HEK293 (cell line): ENCODE measurements at regions of chr16 and their contacts with region 1.

Region 1: DNA sequence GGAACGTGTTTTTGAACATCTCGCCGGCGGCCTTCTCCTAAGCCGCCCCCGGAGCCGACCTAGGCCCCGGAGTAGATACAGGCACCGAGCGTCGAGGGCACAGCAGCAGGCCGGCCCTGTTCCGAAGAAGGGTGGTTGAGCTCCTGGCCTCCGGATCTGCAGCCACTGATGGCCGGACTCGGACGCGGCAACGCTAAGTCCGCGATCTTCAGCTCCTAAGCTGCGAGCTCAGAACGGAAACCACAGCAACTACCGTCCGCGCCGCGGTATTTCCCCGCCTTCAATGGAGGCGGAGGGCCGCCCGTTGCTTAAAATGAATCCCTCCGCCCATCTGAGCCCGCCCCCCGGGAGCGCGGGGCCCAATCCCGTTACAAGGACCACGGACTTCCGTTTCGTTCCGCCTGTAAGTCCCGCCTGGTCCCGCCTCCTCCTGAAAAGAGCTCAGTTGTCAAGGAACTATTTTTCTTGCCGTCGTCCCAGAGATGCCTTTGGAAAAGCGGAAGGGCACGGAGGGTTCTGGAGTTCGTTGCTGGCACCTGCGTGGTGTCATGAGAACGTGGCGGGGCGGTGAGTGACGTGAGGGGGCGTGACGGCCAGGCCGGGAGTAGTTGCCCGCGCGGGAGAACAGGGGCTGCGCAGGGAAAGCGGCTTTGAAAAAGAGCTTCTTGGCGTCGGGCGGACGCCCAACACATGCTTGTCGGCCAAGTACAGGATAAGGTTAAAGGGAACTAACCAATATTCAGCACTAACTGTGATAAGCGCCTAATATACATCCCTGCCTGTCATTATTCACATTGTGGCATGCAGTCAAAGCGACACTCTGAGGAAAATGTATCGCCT is at the start of gene CFAP20:
- H3K4me3 ChIP-seq: peak within 1 kb of the TSS; percentile 83
- H3K27ac ChIP-seq: peak within 1 kb of the TSS; percentile 83
- H3K4me1 ChIP-seq: peaks cover 17% of the 10 kb centered on the region
- CTCF ChIP-seq: no peak

Region 2: GRCh38 chr16:57899771-57900661 is 229.3 kb before region 1 on chr16:
- CTCF ChIA-PET with region 1: interaction called, 13 read pairs
- POLR2A ChIA-PET with region 1: no interaction called
- H3K4me3 ChIP-seq: no peak overlapping the region
- H3K27ac ChIP-seq: no peak overlapping the region
- H3K4me1 ChIP-seq: no peaks in the 10 kb centered on the region
- CTCF ChIP-seq: peak; percentile 80

Region 3: GRCh38 chr16:57916735-57917451 is 212.4 kb before region 1 on chr16:
- CTCF ChIA-PET with region 1: no interaction called
- POLR2A ChIA-PET with region 1: no interaction called
- H3K4me3 ChIP-seq: no peak overlapping the region
- H3K27ac ChIP-seq: no peak overlapping the region
- H3K4me1 ChIP-seq: no peaks in the 10 kb centered on the region
- CTCF ChIP-seq: no peak

Region 4: DNA sequence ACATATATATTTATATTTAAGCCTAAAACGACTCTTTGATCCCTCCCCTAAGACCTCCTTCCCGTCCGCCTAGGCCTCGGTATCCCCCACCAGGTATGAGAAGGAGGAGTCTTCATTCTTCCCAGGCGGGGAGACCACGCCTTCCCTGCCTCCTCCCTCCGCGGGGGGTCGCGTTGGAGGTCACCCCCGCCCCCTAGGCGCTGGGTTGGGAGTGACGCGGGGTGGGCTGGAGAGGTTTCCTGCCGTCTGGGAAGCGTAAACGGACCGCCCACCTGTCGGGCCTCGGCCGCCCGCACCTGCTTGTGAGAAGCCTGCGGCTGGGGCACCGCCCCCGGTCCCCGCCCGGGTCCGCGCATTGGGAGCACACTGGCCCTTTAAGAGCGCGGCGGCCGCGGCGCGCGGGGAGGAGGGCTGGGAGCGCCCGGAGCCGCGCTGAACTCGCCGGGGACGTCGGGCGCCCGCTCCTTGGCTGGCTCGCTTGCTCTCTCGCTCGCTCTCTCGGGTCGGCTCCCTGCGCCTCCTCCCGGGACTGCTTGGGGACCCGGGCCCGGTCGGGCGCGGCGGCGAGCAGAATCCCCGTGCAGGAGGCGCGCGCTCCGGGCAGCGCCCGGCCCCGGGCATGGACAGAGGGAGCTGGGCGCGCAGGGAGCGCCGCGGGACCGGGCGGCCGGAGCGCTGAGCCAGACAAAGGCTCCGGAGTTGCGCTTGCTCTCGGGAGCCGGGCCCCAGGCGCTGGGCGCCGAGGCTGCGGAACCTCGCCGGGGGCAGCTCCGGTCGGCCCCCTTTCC is 103.8 kb before region 1 on chr16 and contains the start of gene MMP15:
- CTCF ChIA-PET with region 1: interaction called, 9 read pairs
- POLR2A ChIA-PET with region 1: interaction called, 51 read pairs
- H3K4me3 ChIP-seq: peak within 1 kb of the TSS; percentile 63
- H3K27ac ChIP-seq: peak within 1 kb of the TSS; percentile 68; the same call in 1 of the 2 replicates
- H3K4me1 ChIP-seq: peaks cover 16% of the 10 kb centered on the region
- CTCF ChIP-seq: peak; percentile 14; the same call in 1 of the 2 replicates

Region 5: GRCh38 chr16:58148526-58148925 is 19.2 kb after region 1 on chr16:
- CTCF ChIA-PET with region 1: interaction called, 3 read pairs
- POLR2A ChIA-PET with region 1: interaction called, 10 read pairs
- H3K4me3 ChIP-seq: no peak overlapping the region
- H3K27ac ChIP-seq: no peak overlapping the region
- H3K4me1 ChIP-seq: no peaks in the 10 kb centered on the region
- CTCF ChIP-seq: no peak

Region 6: DNA sequence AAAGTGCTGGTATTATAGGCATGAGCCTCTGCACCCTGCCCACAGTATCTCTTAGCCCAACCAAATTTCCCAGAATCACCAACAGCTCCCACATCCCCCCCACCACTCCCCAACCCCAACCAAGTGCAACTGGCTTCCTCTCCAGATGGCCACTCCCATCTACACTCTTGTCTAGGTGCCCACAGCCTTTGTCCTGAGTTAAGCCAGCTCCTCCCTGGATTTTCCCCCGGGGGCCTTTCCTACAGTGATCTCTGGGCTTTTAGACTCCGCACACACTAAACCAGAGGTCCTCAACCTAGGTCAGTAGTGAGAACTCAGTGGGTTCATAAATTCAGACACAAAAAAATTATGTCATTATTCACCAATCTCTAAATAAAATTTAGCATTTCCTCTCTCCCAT is 77.3 kb after region 1 on chr16:
- CTCF ChIA-PET with region 1: no interaction called
- POLR2A ChIA-PET with region 1: no interaction called
- H3K4me3 ChIP-seq: no peak overlapping the region
- H3K27ac ChIP-seq: no peak overlapping the region
- H3K4me1 ChIP-seq: no peaks in the 10 kb centered on the region
- CTCF ChIP-seq: no peak

Region 7: GRCh38 chr16:58249780-58250478 is 120.6 kb after region 1 on chr16:
- CTCF ChIA-PET with region 1: no interaction called
- POLR2A ChIA-PET with region 1: interaction called, 10 read pairs
- H3K4me3 ChIP-seq: peak overlapping the region; percentile 72
- H3K27ac ChIP-seq: no peak overlapping the region
- H3K4me1 ChIP-seq: no peaks in the 10 kb centered on the region
- CTCF ChIP-seq: no peak